Psoas muscle (tissue), 8 donors: ENCODE measurements at regions of chr4 and their contacts with region 1.

Region 1: GRCh38 chr4:73208376-73208775 is 50.2 kb downstream of the ANKRD17 start:
- DNase-seq: no peak
- ATAC-seq: peak; percentile 78 to 94 (median 86)
- H3K4me3 ChIP-seq: no peak overlapping the region
- H3K27ac ChIP-seq: peak overlapping the region; percentile 51
- H3K4me1 ChIP-seq: peaks cover 32% of the 10 kb centered on the region
- H3K27me3 ChIP-seq: no peaks in the 10 kb centered on the region
- CTCF ChIP-seq: no peak

Region 2: DNA sequence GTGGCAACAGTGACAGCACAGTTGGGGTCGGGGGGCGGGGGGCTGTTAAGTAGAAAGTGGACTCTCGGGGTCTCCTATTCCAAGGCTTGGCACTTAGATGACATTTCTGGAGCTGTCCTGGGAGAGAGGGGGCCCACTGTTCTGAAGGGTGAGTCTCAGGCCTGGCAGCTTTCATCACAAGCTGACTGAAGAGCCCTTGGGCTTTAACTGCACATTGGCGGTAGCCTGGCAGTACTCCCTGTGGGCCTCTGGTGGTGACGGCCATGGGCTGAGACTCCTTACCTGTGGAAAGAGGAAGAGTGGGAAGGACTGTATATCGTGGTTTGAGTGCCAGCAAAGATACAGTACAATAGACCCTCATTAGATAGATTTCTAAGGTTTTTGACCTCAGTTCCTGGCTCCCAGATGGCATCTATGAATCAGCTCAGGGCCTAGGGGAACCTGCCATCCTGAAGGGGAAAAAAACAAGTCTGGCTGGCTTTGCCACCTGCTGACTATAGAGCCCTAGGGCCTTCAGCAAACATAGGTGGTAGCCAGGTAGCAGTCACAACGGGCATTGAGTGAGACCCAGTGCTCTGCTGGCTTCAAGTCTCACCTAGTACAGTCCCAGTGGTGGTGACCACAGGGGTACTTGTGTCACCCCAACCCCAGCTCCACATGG is 37.7 kb before region 1 on chr4:
- intact Hi-C with region 1: loop called in 1 of 2 experiments (anchors 5 kb)
- DNase-seq: no peak
- ATAC-seq: no peak
- H3K4me3 ChIP-seq: no peak overlapping the region
- H3K27ac ChIP-seq: no peak overlapping the region
- H3K4me1 ChIP-seq: no peaks in the 10 kb centered on the region
- H3K27me3 ChIP-seq: no peaks in the 10 kb centered on the region
- CTCF ChIP-seq: no peak